A673 (cell line): ENCODE measurements at regions of chr9 and their contacts with region 1.

Region 1: DNA sequence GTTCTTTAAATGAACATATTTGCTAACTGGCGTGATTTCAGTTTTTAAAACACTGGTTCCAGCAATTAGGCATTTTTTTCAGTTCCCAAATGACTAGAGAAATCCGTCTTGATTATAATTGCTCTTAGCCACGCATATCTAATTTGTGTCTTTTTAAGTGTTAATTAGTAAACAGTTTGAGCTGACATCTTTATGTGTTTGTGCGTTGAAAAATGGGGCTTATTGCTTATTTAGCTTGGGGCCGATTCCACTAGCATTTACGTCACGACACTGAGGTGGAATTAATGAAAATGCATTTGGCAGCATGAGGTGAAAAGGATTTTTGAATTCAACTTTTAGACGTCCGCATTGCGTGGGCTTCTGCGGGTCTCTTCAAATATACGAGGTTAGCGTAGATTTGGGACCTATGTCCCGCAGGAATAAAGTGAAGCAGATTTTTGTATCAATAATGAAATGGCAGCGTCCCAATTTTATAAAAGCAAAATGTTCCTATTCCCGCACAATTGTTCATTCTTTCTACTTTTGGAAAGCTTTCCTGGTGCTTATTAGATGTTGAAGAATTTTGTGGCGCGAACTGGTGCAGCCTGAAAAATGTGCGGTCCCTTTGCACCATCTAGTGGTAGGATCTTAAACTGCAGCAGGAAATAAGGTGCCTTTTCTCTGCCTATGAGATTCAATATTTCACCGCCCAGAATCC is 122.7 kb upstream of the LMX1B start:
- DNase-seq: peak; percentile 75
- H3K4me3 ChIP-seq: no peak overlapping the region
- H3K27ac ChIP-seq: no peak overlapping the region
- H3K4me1 ChIP-seq: no peaks in the 10 kb centered on the region
- H3K27me3 ChIP-seq: no peaks in the 10 kb centered on the region
- CTCF ChIP-seq: peak; percentile 89

Region 2: DNA sequence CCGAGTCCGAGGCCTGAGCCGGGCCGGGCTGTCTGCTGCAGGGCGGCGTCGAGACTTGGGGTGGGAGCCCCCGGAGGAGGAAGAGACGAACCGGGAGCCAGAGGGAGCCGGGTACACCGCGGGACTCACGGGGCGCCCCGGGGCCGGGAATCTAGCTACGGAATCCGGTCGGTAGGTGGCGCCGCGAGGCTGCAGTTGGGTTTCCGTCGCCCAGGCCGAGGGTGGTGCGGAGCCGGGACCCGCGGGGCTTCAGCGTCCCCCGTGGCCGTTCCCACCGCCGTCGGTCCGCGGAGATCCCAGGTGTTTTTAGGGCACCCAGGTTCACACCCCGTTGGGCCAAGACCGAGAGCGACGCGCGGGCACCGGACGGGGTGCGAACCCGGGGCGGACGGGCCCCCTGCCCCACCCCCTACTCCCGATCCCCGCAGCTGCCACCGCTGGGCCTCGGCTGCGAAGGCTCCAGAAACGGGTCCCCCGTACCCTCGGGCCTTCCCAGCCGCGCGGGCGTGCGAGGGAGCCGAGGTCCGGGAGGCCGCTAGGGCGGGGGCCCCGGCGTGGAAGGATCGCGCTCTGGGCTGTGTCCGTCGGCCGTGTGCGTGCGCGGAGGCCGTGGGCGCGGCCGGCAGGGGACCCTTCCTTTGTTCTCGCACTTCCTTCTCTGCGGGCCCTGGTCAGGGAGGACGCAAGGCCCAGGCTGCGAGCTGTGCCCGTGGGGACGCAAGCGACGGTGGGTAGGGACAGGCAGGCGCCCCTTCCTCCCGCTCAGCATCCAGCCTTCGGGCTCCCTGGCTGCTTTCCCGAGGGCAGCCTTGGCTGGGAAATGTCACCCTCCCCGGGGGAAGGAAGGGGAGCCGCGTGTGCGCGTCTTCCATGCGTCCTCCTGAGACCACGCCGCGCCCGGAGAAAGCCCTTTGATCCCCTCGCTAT is 1082.8 kb before region 1 on chr9:
- CTCF ChIA-PET with region 1: interaction called, 4 read pairs
- POLR2A ChIA-PET with region 1: no interaction called
- intact Hi-C with region 1: loop called (anchors 5 kb)
- DNase-seq: peak; percentile 86
- H3K4me3 ChIP-seq: peak overlapping the region; percentile 63
- H3K27ac ChIP-seq: peak overlapping the region; percentile 50
- H3K4me1 ChIP-seq: no peaks in the 10 kb centered on the region
- H3K27me3 ChIP-seq: no peaks in the 10 kb centered on the region
- CTCF ChIP-seq: peak; percentile 93

Region 3: DNA sequence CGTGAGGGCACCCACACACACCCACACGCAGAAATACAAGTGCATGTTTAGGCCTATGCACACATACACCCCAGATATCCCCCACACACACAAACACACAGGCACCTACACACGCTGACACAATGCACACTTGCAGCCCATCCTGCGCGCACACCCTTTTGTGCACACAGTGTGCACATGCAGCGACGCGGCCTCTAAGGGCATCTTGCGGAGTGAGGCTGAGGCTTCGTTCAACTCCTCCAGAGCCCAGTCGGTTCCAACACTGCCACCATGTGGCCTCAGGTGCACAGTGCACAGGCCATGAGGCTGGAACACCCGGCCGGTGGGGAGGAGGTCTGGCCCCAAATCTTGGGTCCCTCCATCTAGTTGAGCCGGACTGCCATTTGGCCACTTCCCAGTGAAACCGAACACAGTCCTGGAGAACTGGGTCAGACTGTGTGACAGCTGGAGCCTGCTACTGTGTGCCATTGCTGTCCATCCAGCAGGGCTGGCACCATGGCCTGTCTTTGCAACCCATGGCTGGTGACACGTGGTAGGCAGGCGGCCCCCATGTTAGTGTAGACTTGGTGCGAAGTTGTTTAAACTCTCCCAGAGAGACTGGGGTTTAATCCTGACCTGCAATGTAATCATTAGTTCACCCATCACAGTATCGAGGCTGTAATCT is 262.1 kb before region 1 on chr9:
- CTCF ChIA-PET with region 1: no interaction called
- POLR2A ChIA-PET with region 1: no interaction called
- intact Hi-C with region 1: loop called (anchors 5 kb)
- DNase-seq: peak; percentile 76
- H3K4me3 ChIP-seq: no peak overlapping the region
- H3K27ac ChIP-seq: no peak overlapping the region
- H3K4me1 ChIP-seq: no peaks in the 10 kb centered on the region
- H3K27me3 ChIP-seq: peaks cover 63% of the 10 kb centered on the region
- CTCF ChIP-seq: peak; percentile 96

Region 4: DNA sequence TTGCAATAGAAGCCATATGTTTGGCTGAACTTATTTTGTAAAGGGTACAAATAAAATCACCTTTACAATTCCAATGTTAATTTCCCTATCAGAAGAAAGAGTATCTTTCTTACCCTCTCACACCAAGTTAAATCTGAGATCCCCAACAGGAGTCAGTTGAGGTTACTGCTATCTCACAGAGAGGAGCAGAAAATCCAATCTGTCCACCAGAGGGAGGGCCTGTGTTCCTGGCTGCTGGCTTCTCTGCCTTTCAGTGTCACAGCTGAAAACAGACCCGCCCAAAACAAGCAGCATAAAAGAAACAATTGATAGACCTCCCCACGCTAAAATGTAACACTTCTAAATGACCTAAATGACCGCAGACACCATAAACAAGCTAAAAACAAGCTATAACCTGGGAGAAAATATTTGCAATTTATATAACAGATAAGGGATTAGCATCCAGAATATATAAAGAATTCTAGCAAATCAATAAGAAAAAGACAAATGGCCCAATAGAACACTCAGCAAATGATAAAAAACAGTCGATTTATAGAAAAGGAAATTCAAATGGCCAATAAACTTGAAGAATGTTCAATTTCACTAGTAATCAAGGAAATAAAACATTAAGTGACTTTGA is 188.9 kb before region 1 on chr9:
- CTCF ChIA-PET with region 1: interaction called, 3 read pairs
- POLR2A ChIA-PET with region 1: no interaction called
- intact Hi-C with region 1: loop called (anchors 2 kb)
- DNase-seq: peak; percentile 68
- H3K4me3 ChIP-seq: no peak overlapping the region
- H3K27ac ChIP-seq: no peak overlapping the region
- H3K4me1 ChIP-seq: no peaks in the 10 kb centered on the region
- H3K27me3 ChIP-seq: no peaks in the 10 kb centered on the region
- CTCF ChIP-seq: peak; percentile 80

Region 5: GRCh38 chr9:126398403-126399058 is 92.5 kb before region 1 on chr9:
- CTCF ChIA-PET with region 1: interaction called, 4 read pairs
- POLR2A ChIA-PET with region 1: no interaction called
- intact Hi-C with region 1: loop called (anchors 5 kb)
- DNase-seq: peak; percentile 62
- H3K4me3 ChIP-seq: no peak overlapping the region
- H3K27ac ChIP-seq: no peak overlapping the region
- H3K4me1 ChIP-seq: no peaks in the 10 kb centered on the region
- H3K27me3 ChIP-seq: no peaks in the 10 kb centered on the region
- CTCF ChIP-seq: peak; percentile 99

Region 6: DNA sequence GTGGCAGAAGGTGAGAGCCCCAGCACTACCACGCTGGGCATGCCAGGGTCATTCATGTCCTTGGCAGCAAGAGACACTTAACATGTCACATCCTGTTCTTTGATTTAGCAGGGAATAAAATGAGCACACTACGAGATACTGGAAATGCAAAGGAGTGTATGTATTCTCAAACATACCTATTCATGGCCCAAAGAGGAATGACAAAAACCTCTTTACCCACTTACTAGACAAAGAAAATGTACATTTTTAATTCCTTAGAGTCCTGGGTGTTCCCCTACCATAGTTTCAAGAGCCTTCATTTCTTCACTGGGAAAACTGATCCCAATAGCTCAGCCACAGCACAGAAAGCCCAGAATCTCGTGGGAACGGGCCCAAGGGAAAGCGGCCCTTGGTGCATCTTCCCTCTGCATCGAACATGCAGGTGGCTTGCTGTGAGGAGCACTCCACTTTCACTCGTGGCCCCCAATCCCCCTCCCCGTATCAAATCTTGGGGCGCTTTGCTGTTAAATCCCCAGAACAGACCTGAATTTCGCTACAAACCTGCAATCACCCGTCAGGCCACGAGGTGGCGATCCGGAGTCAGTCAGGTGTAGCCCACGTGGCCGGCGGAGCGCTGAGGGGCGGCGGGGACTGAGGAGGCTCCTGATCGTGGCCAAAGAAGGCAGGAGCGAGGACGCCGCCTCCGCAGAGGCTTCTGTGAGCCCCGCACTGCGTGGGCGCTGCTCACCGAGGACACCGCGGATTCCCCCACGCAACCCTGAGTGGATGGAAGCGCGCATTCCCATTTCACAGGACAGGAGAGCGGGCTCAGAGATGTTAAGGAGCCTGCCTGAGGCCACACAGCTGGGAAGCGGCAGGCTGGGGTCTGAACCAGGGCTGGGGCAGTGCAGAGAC is 214.1 kb after region 1 on chr9:
- CTCF ChIA-PET with region 1: no interaction called
- POLR2A ChIA-PET with region 1: no interaction called
- intact Hi-C with region 1: loop called (anchors 10 kb)
- DNase-seq: peak; percentile 81
- H3K4me3 ChIP-seq: peak overlapping the region; percentile 14
- H3K27ac ChIP-seq: no peak overlapping the region
- H3K4me1 ChIP-seq: peaks cover 17% of the 10 kb centered on the region
- H3K27me3 ChIP-seq: peaks cover 5% of the 10 kb centered on the region
- CTCF ChIP-seq: peak; percentile 93